HEK293 (cell line): ENCODE measurements at regions of chr6 and their contacts with region 1.

Region 1: DNA sequence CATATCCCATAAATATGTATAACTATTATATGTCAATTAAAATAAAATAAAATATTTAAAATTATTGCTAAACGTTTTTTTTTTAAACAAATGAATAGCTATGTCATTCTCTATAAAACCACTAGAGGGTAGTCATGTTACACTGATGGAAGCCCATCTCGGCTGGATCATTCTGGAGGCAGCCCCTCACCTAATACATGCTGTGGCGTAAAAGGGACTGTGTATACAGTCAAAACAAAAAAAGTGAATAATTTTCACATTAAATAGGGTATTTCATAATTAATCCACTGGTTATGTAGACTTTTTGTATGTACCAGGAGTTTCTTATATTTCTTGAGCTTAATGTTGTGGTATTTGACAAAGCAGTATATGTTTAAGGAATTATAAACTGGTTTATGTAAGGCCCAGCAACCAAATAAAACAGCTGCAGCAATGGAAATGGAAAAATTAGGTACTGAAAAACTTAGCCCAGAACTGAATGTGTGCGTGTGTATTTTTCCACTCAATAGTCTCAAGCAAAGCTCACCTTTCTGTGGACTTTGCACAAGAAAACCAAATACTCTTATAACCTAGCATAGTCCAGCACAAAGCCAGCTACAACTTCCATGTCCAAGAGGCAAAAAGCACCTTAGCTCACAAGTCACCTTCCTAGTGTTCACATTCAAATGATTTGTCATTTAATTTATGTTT is 81.7 kb downstream of the COL9A1 start:
- H3K4me3 ChIP-seq: no peak overlapping the region
- H3K27ac ChIP-seq: no peak overlapping the region
- H3K4me1 ChIP-seq: no peaks in the 10 kb centered on the region
- CTCF ChIP-seq: 0 out of 2 replicates have a peak, but pooled peaks have one; percentile 27

Region 2: GRCh38 chr6:70103798-70104197 is 117.4 kb before region 1 on chr6:
- CTCF ChIA-PET with region 1: no interaction called
- POLR2A ChIA-PET with region 1: no interaction called
- H3K4me3 ChIP-seq: no peak overlapping the region
- H3K27ac ChIP-seq: no peak overlapping the region
- H3K4me1 ChIP-seq: no peaks in the 10 kb centered on the region
- CTCF ChIP-seq: no peak

Region 3: DNA sequence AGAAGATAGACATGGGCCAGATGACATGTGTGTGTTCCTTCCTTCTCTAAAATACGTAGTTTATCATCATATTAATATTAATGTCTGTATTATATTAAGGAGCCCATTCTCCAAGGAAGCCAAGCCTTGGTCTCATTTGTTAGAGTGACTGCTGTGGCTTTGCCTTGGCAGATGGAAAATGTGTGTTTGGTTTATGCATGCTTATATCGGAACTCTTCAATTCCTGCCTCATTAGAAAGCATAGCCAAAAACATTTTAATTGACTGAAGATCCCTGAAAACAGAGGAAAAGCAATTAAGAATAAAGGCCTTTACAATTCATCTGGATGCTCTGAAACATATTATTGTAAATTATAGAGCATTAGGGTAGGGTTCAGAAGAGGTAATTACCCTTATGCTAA is 24.6 kb before region 1 on chr6:
- CTCF ChIA-PET with region 1: no interaction called
- POLR2A ChIA-PET with region 1: no interaction called
- H3K4me3 ChIP-seq: no peak overlapping the region
- H3K27ac ChIP-seq: no peak overlapping the region
- H3K4me1 ChIP-seq: no peaks in the 10 kb centered on the region
- CTCF ChIP-seq: no peak

Region 4: GRCh38 chr6:70210462-70210861 is 10.7 kb before region 1 on chr6:
- CTCF ChIA-PET with region 1: interaction called, 40 read pairs
- POLR2A ChIA-PET with region 1: no interaction called
- H3K4me3 ChIP-seq: no peak overlapping the region
- H3K27ac ChIP-seq: no peak overlapping the region
- H3K4me1 ChIP-seq: no peaks in the 10 kb centered on the region
- CTCF ChIP-seq: 0 out of 2 replicates have a peak, but pooled peaks have one; percentile 20

Region 5: GRCh38 chr6:70236343-70236742 is 15.2 kb after region 1 on chr6:
- CTCF ChIA-PET with region 1: interaction called, 52 read pairs
- POLR2A ChIA-PET with region 1: no interaction called
- H3K4me3 ChIP-seq: no peak overlapping the region
- H3K27ac ChIP-seq: no peak overlapping the region
- H3K4me1 ChIP-seq: no peaks in the 10 kb centered on the region
- CTCF ChIP-seq: no peak

Region 6: DNA sequence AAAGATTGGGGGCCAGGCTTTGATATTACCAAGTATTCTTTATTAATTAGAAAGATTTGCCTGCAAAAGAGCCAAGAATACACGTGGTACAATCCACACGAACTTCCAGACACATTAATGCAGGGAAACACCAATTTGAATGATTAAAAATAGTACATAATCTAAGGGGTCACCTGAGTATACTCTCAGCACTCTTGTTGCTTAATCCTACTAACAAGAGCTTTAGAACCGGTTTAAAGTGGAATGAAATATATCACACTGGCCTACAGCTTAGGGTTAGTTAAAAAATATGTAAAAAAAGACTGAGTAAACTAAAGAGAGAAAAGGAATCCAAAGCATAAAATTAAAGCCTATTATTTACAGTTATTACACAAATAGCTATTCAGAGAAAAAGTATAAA is 32.8 kb after region 1 on chr6:
- CTCF ChIA-PET with region 1: interaction called, 11 read pairs
- POLR2A ChIA-PET with region 1: no interaction called
- H3K4me3 ChIP-seq: no peak overlapping the region
- H3K27ac ChIP-seq: no peak overlapping the region
- H3K4me1 ChIP-seq: no peaks in the 10 kb centered on the region
- CTCF ChIP-seq: no peak

Region 7: GRCh38 chr6:70369332-70369950 is 148.3 kb after region 1 on chr6:
- CTCF ChIA-PET with region 1: interaction called, 112 read pairs
- POLR2A ChIA-PET with region 1: no interaction called
- H3K4me3 ChIP-seq: no peak overlapping the region
- H3K27ac ChIP-seq: no peak overlapping the region
- H3K4me1 ChIP-seq: no peaks in the 10 kb centered on the region
- CTCF ChIP-seq: peak; percentile 78

Region 8: GRCh38 chr6:70686548-70687133 is 465.5 kb after region 1 on chr6:
- CTCF ChIA-PET with region 1: interaction called, 13 read pairs
- POLR2A ChIA-PET with region 1: no interaction called
- H3K4me3 ChIP-seq: no peak overlapping the region
- H3K27ac ChIP-seq: no peak overlapping the region
- H3K4me1 ChIP-seq: peaks cover 24% of the 10 kb centered on the region
- CTCF ChIP-seq: peak; percentile 23; the same call in 1 of the 2 replicates

Region 9: DNA sequence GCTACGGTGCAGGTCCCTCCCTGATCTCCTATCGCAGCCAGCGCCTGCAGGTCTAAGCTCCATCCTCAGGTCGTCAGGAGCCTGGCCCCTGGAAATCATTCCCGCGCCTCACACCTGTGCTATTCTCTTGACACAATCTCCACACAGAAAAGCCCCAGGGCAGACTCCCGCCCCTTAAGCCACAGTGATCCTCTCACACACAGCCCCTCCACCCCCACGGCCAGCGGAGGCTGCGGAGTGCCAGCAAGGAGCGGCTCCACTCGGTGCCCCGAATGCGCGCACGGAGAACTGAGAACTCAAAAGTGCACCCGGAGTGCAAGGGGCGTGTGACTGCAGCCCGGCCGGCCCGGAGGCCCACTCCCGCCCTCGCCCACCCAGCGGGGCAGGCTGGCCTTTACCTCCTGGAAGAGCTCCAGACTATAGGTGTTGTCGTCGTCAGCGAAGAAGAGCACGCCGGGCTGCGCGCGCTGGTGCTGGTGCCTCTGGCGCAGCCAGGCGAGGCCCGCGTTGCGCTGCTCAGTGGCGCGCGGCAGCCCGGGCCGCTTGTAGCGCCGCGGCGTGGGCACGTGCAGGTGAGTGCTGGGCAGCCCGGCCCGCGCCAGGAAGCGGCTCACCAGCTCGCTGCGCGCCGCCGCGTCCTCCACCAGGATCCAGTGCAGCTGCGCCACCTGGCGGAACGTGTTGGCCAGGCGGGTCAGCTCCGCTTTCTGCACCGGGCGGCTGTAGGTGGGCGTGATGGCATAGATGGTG is 734.4 kb after region 1 on chr6:
- CTCF ChIA-PET with region 1: interaction called, 13 read pairs
- POLR2A ChIA-PET with region 1: interaction called, 3 read pairs
- H3K4me3 ChIP-seq: peak overlapping the region; percentile 57
- H3K27ac ChIP-seq: no peak overlapping the region; the same call in 1 of the 2 replicates
- H3K4me1 ChIP-seq: no peaks in the 10 kb centered on the region
- CTCF ChIP-seq: peak; percentile 96